GM12878 (cell line): ENCODE measurements at regions of chr1 and their contacts with region 1.

Region 1: GRCh38 chr1:160291248-160292220 is 6.6 kb upstream of the PEX19 start:
- DNase-seq: peak; percentile 45
- ATAC-seq: peak; percentile 99
- H3K4me3 ChIP-seq: no peak overlapping the region
- H3K27ac ChIP-seq: no peak overlapping the region
- H3K4me1 ChIP-seq: no peaks in the 10 kb centered on the region
- H3K27me3 ChIP-seq: no peaks in the 10 kb centered on the region
- CTCF ChIP-seq: peak; percentile 74 to 84 (median 80)
- EP300 ChIP-seq: no peak
- POLR2A ChIP-seq: no peak
- RAD21 ChIP-seq: peak; percentile 67

Region 2: DNA sequence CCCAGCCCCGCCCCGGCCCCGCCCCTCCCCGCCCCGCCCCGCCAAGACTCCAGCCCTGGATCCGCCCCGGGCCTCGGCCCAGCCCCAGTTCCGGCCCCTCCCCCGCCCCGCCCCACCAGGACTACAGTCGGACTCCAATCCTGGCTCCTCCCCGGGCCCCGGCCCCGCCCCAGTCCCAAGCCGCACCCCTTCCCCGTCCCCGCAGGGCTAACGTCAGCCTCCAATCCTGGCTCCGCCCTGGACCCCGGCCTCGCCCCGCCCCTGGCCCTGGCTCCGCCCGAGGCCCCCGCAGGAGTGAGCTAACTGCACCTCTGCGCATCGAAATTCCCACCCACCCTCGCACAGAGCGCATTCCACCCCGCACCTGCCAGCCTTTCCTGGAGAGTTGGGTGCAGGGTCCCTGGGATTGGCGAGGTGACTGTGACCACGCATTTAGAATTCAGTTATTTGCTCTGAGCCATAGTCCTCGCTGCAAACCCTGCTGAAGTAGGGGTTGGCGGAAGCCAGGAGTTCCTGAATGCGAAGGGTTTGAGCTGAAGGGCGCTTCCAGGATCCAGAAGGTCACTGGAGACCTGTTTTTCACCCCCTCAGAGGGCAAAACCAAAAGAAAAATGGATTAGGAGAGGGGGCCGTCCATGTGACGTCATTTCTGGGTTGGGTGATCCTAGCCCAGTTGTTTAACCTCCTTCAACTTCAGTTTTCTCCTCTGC is 192.5 kb before region 1 on chr1:
- CTCF ChIA-PET with region 1: interaction called, 165 read pairs
- POLR2A ChIA-PET with region 1: interaction called, 4 read pairs
- RAD21 ChIA-PET with region 1: interaction called, 45 read pairs
- SMC1A ChIA-PET with region 1: interaction called, 46 read pairs
- in situ Hi-C with region 1: loop called (anchors 5 kb)
- intact Hi-C with region 1: loop called (anchors 1 kb)
- DNase-seq: peak; percentile 55
- ATAC-seq: peak; percentile 85
- H3K4me3 ChIP-seq: peak overlapping the region; percentile 82
- H3K27ac ChIP-seq: peak overlapping the region; percentile 54; the same call in 1 of the 2 replicates
- H3K4me1 ChIP-seq: peaks cover 25% of the 10 kb centered on the region
- H3K27me3 ChIP-seq: no peaks in the 10 kb centered on the region
- CTCF ChIP-seq: no peak
- EP300 ChIP-seq: no peak
- POLR2A ChIP-seq: no peak
- RAD21 ChIP-seq: no peak

Region 3: GRCh38 chr1:160193091-160193819 is 98.3 kb before region 1 on chr1:
- CTCF ChIA-PET with region 1: interaction called, 231 read pairs
- POLR2A ChIA-PET with region 1: interaction called, 4 read pairs
- RAD21 ChIA-PET with region 1: interaction called, 105 read pairs
- SMC1A ChIA-PET with region 1: interaction called, 57 read pairs
- in situ Hi-C with region 1: loop called (anchors 5 kb)
- intact Hi-C with region 1: loop called (anchors 1 kb)
- DNase-seq: peak; percentile 48
- ATAC-seq: peak; percentile 86
- H3K4me3 ChIP-seq: no peak overlapping the region
- H3K27ac ChIP-seq: no peak overlapping the region
- H3K4me1 ChIP-seq: peaks cover 21% of the 10 kb centered on the region
- H3K27me3 ChIP-seq: peaks cover 0 to 3% of the 10 kb centered on the region in 2 experiments; a peak in 1 of 4 replicates
- CTCF ChIP-seq: peak; percentile 95 to 99 (median 97); a peak in 5 of 6 replicates
- EP300 ChIP-seq: no peak
- POLR2A ChIP-seq: no peak
- RAD21 ChIP-seq: peak; percentile 100

Region 4: DNA sequence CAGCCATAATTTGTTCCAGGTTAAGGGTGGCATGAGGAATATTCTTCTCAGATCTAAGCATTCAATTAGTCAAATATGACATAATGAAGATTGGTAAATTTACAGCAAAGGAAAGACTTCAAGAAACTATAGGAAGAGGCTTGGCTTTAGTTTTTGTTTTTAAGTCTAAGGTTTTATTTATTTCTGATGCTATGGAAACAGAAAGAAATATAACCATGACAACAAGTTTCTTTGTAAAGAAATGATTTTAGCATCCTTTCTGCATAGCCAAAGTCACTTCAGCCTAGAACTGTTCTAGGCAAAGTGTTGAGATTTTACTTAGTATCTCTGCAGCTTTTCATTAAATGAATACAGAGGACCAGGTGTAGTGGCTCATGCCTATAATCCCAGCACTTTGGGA is 58.6 kb before region 1 on chr1:
- CTCF ChIA-PET with region 1: interaction called, 29 read pairs
- POLR2A ChIA-PET with region 1: interaction called, 4 read pairs
- RAD21 ChIA-PET with region 1: interaction called, 6 read pairs
- SMC1A ChIA-PET with region 1: interaction called, 10 read pairs
- in situ Hi-C with region 1: no loop called
- intact Hi-C with region 1: no loop called
- DNase-seq: no peak
- ATAC-seq: no peak
- H3K4me3 ChIP-seq: no peak overlapping the region
- H3K27ac ChIP-seq: no peak overlapping the region
- H3K4me1 ChIP-seq: peaks cover 4% of the 10 kb centered on the region; the same call in 1 of the 2 replicates
- H3K27me3 ChIP-seq: no peaks in the 10 kb centered on the region
- CTCF ChIP-seq: no peak
- EP300 ChIP-seq: no peak
- POLR2A ChIP-seq: no peak
- RAD21 ChIP-seq: no peak

Region 5: GRCh38 chr1:160271025-160271424 is 20.5 kb before region 1 on chr1:
- CTCF ChIA-PET with region 1: interaction called, 44 read pairs
- POLR2A ChIA-PET with region 1: interaction called, 5 read pairs
- RAD21 ChIA-PET with region 1: interaction called, 5 read pairs
- SMC1A ChIA-PET with region 1: interaction called, 19 read pairs
- in situ Hi-C with region 1: no loop called
- intact Hi-C with region 1: no loop called
- DNase-seq: no peak
- ATAC-seq: no peak
- H3K4me3 ChIP-seq: no peak overlapping the region
- H3K27ac ChIP-seq: no peak overlapping the region
- H3K4me1 ChIP-seq: no peaks in the 10 kb centered on the region
- H3K27me3 ChIP-seq: no peaks in the 10 kb centered on the region
- CTCF ChIP-seq: no peak
- EP300 ChIP-seq: no peak
- POLR2A ChIP-seq: no peak
- RAD21 ChIP-seq: no peak

Region 6: GRCh38 chr1:160332516-160332915 is 41.0 kb after region 1 on chr1:
- CTCF ChIA-PET with region 1: interaction called, 15 read pairs
- POLR2A ChIA-PET with region 1: no interaction called
- RAD21 ChIA-PET with region 1: no interaction called
- SMC1A ChIA-PET with region 1: interaction called, 7 read pairs
- in situ Hi-C with region 1: no loop called
- intact Hi-C with region 1: no loop called
- DNase-seq: no peak
- ATAC-seq: no peak
- H3K4me3 ChIP-seq: no peak overlapping the region
- H3K27ac ChIP-seq: no peak overlapping the region
- H3K4me1 ChIP-seq: no peaks in the 10 kb centered on the region
- H3K27me3 ChIP-seq: no peaks in the 10 kb centered on the region
- CTCF ChIP-seq: no peak
- EP300 ChIP-seq: no peak
- POLR2A ChIP-seq: no peak
- RAD21 ChIP-seq: no peak